Caco-2 (cell line): ENCODE measurements at regions of chr3 and their contacts with region 1.

Region 1: DNA sequence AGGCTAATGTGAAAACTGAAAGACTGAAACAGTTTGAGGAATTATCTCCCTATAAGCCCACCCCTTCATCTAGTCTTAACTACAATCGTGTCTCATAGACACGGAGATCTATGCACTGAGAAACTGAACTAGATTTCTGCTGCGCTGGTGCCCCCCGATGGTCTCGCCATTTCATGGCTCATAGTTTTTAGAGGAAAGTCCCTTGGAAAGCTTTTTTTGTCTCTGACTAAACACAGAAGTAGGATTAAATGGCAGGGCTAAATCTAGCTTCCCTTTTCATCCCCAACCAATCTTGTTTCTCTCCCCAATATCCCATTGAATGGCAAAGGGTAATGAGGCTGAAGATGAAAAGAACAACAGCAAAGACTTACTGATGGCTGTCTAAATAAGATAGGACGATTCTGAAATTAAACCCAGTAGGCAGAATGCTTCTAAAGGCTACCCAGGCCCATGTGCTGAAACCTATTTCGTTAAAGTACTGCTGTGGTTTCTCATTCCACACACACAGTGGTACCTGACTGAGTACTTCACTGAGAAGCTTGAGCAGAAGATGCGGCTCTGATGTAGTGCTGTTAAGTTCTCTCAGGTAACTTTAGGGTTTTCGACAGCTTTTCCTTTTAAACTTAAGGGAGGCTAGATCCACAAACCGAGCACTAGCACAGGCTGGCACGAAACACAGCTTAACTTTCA is 142.7 kb downstream of the GADL1 start:
- DNase-seq: peak; percentile 51 to 58
- H3K4me3 ChIP-seq: no peak overlapping the region
- H3K4me3 Mint-ChIP-seq: no peak overlapping the region
- H3K27ac Mint-ChIP-seq: no peak overlapping the region
- H3K4me1 ChIP-seq: peaks cover 17% of the 10 kb centered on the region
- H3K4me1 Mint-ChIP-seq: peaks cover 15% of the 10 kb centered on the region
- H3K27me3 ChIP-seq: no peaks in the 10 kb centered on the region
- H3K27me3 Mint-ChIP-seq: no peaks in the 10 kb centered on the region
- CTCF ChIP-seq: peak; percentile 36 to 43

Region 2: GRCh38 chr3:30012941-30013543 is 738.7 kb before region 1 on chr3:
- CTCF ChIA-PET with region 1: interaction called, 7 read pairs
- POLR2A ChIA-PET with region 1: no interaction called
- intact Hi-C with region 1: loop called (anchors 1 kb)
- DNase-seq: peak; percentile 71 to 76
- H3K4me3 ChIP-seq: no peak overlapping the region
- H3K4me3 Mint-ChIP-seq: no peak overlapping the region
- H3K27ac Mint-ChIP-seq: no peak overlapping the region
- H3K4me1 ChIP-seq: no peaks in the 10 kb centered on the region
- H3K4me1 Mint-ChIP-seq: no peaks in the 10 kb centered on the region
- H3K27me3 ChIP-seq: no peaks in the 10 kb centered on the region
- H3K27me3 Mint-ChIP-seq: no peaks in the 10 kb centered on the region
- CTCF ChIP-seq: peak; percentile 64 to 66

Region 3: DNA sequence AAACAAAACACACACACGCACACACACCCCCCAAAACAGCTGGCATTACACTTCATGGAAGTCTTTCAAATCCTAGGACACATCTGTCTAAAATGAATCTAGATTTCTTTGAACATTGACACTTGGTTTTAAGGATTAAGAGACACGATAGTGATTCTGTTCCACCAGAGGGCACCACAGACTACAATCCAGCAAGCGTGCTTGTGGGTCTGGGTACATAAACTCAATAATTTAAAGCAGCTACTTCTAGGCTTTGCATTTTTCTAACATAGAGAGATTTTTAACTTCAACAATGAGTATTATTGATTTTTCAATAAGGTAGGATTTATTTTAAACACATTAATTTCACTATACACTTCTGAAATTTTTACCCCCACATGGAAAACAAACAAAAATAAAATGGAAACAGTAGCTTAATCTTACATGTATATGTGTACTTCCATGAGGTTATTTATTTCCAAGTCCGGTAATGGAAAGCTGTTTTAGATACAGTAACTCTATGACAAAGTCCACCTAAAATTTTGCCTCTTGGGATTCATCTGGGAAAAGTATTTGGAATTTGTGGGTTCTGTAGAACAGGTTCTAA is 709.4 kb before region 1 on chr3:
- CTCF ChIA-PET with region 1: no interaction called
- POLR2A ChIA-PET with region 1: no interaction called
- intact Hi-C with region 1: loop called (anchors 1 kb)
- DNase-seq: peak; percentile 69 to 72
- H3K4me3 ChIP-seq: no peak overlapping the region
- H3K4me3 Mint-ChIP-seq: no peak overlapping the region
- H3K27ac Mint-ChIP-seq: no peak overlapping the region
- H3K4me1 ChIP-seq: peaks cover 10% of the 10 kb centered on the region; the same call in 1 of the 2 replicates
- H3K4me1 Mint-ChIP-seq: no peaks in the 10 kb centered on the region
- H3K27me3 ChIP-seq: no peaks in the 10 kb centered on the region
- H3K27me3 Mint-ChIP-seq: no peaks in the 10 kb centered on the region
- CTCF ChIP-seq: peak; percentile 76 to 86

Region 4: GRCh38 chr3:30567139-30567753 is 184.5 kb before region 1 on chr3:
- CTCF ChIA-PET with region 1: no interaction called
- POLR2A ChIA-PET with region 1: no interaction called
- intact Hi-C with region 1: loop called (anchors 5 kb)
- DNase-seq: peak; percentile 35 to 39
- H3K4me3 ChIP-seq: no peak overlapping the region
- H3K4me3 Mint-ChIP-seq: no peak overlapping the region
- H3K27ac Mint-ChIP-seq: no peak overlapping the region
- H3K4me1 ChIP-seq: peaks cover 3% of the 10 kb centered on the region; the same call in 1 of the 2 replicates
- H3K4me1 Mint-ChIP-seq: peaks cover 6% of the 10 kb centered on the region
- H3K27me3 ChIP-seq: no peaks in the 10 kb centered on the region
- H3K27me3 Mint-ChIP-seq: no peaks in the 10 kb centered on the region
- CTCF ChIP-seq: peak in 1 of 2 experiments; percentile 23

Region 5: DNA sequence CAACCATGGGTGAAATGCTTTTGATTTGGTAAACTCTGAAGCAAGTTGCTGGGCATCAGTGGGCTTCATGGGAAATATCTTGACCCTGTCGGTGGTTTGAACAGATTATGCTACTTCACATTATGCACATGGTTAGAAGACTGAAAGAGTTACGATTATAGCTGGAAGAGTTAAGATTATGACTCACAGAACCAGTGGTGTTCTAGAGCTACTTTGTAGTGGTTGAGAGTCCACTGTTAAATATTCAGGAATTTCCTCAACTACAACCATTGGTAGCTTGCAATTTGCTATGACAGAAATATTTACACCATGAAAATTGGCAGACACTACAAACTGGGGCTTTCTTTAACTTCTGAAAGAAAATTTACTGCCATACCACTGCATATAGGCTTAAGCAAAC is 43.4 kb after region 1 on chr3:
- CTCF ChIA-PET with region 1: no interaction called
- POLR2A ChIA-PET with region 1: no interaction called
- intact Hi-C with region 1: no loop called
- DNase-seq: no peak
- H3K4me3 ChIP-seq: no peak overlapping the region
- H3K4me3 Mint-ChIP-seq: no peak overlapping the region
- H3K27ac Mint-ChIP-seq: no peak overlapping the region
- H3K4me1 ChIP-seq: no peaks in the 10 kb centered on the region
- H3K4me1 Mint-ChIP-seq: no peaks in the 10 kb centered on the region
- H3K27me3 ChIP-seq: no peaks in the 10 kb centered on the region
- H3K27me3 Mint-ChIP-seq: no peaks in the 10 kb centered on the region
- CTCF ChIP-seq: no peak

Region 6: GRCh38 chr3:30904986-30905657 is 153.4 kb after region 1 on chr3:
- CTCF ChIA-PET with region 1: no interaction called
- POLR2A ChIA-PET with region 1: no interaction called
- intact Hi-C with region 1: no loop called
- DNase-seq: peak; percentile 70 to 71
- H3K4me3 ChIP-seq: no peak overlapping the region
- H3K4me3 Mint-ChIP-seq: no peak overlapping the region
- H3K27ac Mint-ChIP-seq: peak overlapping the region; percentile 81
- H3K4me1 ChIP-seq: peaks cover 28% of the 10 kb centered on the region
- H3K4me1 Mint-ChIP-seq: peaks cover 21% of the 10 kb centered on the region
- H3K27me3 ChIP-seq: no peaks in the 10 kb centered on the region
- H3K27me3 Mint-ChIP-seq: no peaks in the 10 kb centered on the region
- CTCF ChIP-seq: no peak